Activated B cell treated with CpG ODN at 0.5 μM for 24 hours (primary cell): ENCODE measurements at regions of chr3 and their contacts with region 1.

Region 1: DNA sequence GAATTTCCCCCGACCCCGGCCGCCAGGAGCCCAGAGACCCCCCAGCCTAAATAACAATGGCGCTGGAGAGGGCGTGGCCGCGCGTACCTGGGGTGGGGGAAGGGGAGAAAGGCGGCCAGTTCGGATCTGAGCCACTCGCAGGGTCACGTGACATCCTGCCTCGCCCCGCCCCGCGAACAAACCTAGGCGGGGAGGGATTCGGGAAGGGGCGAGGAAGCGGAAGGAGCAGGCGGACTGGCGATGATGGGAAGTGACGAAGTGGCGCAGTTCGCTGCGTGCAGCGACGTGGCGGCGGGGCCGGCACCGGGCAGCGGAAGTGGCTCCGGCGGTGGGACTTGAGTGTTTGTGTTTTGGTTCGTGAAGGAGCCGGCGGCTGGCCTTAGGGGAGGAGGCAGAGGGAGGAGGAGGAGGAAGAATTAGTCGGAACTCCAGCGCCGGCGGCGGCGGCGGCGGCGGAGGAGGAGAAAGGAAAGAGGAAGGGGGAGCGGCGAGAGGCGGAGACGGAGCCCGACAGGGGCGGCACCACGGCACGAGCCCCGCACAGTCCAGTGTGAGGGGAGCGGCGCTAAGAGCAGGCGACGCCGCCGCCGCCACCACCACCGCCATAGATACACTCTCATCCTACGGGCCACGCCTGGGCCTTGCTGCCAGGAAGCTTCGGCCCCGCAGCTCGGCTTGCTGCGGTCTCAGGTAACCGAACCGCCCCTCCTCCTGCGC is at the start of gene RAB5A:
- DNase-seq: peak; percentile 95
- ATAC-seq: peak; percentile 87
- H3K4me3 Mint-ChIP-seq: peak within 1 kb of the TSS; percentile 94
- H3K27ac Mint-ChIP-seq: peak within 1 kb of the TSS; percentile 96
- H3K4me1 Mint-ChIP-seq: peaks cover 47% of the 10 kb centered on the region
- H3K27me3 Mint-ChIP-seq: no peaks in the 10 kb centered on the region
- CTCF ChIP-seq: no peak
- total RNA-seq, gene RAB5A: 43.2 and 45.2 TPM in 2 replicates

Region 2: GRCh38 chr3:18424729-18425640 is 1522.0 kb before region 1 on chr3 and contains the start of gene SATB1:
- CTCF ChIA-PET with region 1: no interaction called
- POLR2A ChIA-PET with region 1: no interaction called
- intact Hi-C with region 1: loop called (anchors 10 kb)
- DNase-seq: peak; percentile 68
- ATAC-seq: peak; percentile 49
- H3K4me3 Mint-ChIP-seq: peak within 1 kb of the TSS; percentile 91
- H3K27ac Mint-ChIP-seq: peak within 1 kb of the TSS; percentile 87
- H3K4me1 Mint-ChIP-seq: peaks cover 40% of the 10 kb centered on the region
- H3K27me3 Mint-ChIP-seq: no peaks in the 10 kb centered on the region
- CTCF ChIP-seq: no peak
- total RNA-seq, gene SATB1: 23.0 and 30.8 TPM in 2 replicates

Region 3: DNA sequence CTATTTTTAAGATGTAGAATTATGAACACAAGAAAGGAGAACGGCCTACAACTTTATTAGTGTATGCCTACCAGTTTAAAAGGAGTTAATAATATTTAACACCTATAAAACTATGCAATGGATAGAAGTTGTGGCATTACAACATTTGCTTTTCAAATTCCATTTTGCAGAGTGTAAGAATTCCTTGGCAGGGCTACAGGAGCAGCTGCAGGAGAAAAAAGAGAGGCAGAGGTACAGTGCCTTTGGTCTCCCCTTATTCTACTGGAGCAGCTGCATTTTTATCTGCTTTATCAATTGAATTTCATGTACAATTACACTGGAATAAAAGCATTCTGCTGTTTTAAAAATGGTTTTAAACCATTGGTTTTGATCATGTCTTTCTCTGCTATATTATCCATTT is 944.4 kb before region 1 on chr3:
- CTCF ChIA-PET with region 1: no interaction called
- POLR2A ChIA-PET with region 1: no interaction called
- intact Hi-C with region 1: no loop called
- DNase-seq: no peak
- ATAC-seq: no peak
- H3K4me3 Mint-ChIP-seq: no peak overlapping the region
- H3K27ac Mint-ChIP-seq: no peak overlapping the region
- H3K4me1 Mint-ChIP-seq: no peaks in the 10 kb centered on the region
- H3K27me3 Mint-ChIP-seq: no peaks in the 10 kb centered on the region
- CTCF ChIP-seq: no peak

Region 4: DNA sequence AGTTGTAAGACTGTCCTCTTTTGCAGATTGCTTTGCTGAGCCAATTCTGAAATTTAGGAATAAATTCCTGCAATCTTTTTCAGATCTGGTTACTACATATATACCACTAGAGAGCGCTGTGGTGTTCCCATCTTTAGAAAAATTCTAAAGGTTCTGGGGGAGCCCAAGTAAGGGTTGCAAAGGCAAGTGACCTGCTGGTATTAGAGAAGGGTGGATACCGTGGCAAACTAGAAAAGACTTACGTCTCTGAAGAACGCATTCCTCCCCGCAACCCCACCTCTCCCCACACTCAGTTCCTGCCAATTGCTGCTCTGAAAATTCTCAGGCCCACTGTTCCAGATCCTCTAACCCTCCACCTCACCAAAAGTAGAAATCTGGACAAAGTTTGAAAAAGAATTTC is 61.5 kb before region 1 on chr3:
- CTCF ChIA-PET with region 1: no interaction called
- POLR2A ChIA-PET with region 1: no interaction called
- intact Hi-C with region 1: loop called (anchors 5 kb)
- DNase-seq: no peak
- ATAC-seq: no peak
- H3K4me3 Mint-ChIP-seq: no peak overlapping the region
- H3K27ac Mint-ChIP-seq: no peak overlapping the region
- H3K4me1 Mint-ChIP-seq: no peaks in the 10 kb centered on the region
- H3K27me3 Mint-ChIP-seq: no peaks in the 10 kb centered on the region
- CTCF ChIP-seq: no peak

Region 5: GRCh38 chr3:19960696-19961095 is 13.7 kb after region 1 on chr3:
- CTCF ChIA-PET with region 1: no interaction called
- POLR2A ChIA-PET with region 1: no interaction called
- intact Hi-C with region 1: loop called (anchors 1 kb)
- DNase-seq: no peak
- ATAC-seq: no peak
- H3K4me3 Mint-ChIP-seq: no peak overlapping the region
- H3K27ac Mint-ChIP-seq: no peak overlapping the region
- H3K4me1 Mint-ChIP-seq: peaks cover 36% of the 10 kb centered on the region
- H3K27me3 Mint-ChIP-seq: no peaks in the 10 kb centered on the region
- CTCF ChIP-seq: no peak

Region 6: GRCh38 chr3:20111836-20112235 is 164.8 kb after region 1 on chr3:
- CTCF ChIA-PET with region 1: no interaction called
- POLR2A ChIA-PET with region 1: no interaction called
- intact Hi-C with region 1: no loop called
- DNase-seq: no peak
- ATAC-seq: no peak
- H3K4me3 Mint-ChIP-seq: no peak overlapping the region
- H3K27ac Mint-ChIP-seq: no peak overlapping the region
- H3K4me1 Mint-ChIP-seq: no peaks in the 10 kb centered on the region
- H3K27me3 Mint-ChIP-seq: no peaks in the 10 kb centered on the region
- CTCF ChIP-seq: no peak

Region 7: DNA sequence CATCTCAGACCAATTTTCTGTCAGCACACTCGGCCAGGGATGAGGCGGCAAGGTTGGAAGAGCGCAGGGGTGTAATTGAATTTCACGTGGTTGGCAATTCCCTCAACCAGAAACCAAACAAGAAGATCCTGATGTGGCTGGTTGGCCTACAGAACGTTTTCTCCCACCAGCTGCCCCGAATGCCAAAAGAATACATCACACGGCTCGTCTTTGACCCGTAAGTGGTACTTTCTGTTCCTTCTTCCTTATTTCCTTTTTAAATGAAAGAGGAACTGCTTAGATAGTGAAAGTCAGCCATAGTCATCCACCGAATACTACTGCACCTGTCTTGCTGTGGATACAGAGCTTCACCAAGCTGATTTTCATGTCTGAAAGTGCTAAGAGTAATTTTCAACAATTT is 178.9 kb after region 1 on chr3:
- CTCF ChIA-PET with region 1: no interaction called
- POLR2A ChIA-PET with region 1: interaction called, 5 read pairs
- intact Hi-C with region 1: loop called (anchors 1 kb)
- DNase-seq: peak; percentile 39
- ATAC-seq: peak; percentile 95
- H3K4me3 Mint-ChIP-seq: peak overlapping the region; percentile 58
- H3K27ac Mint-ChIP-seq: peak overlapping the region; percentile 87
- H3K4me1 Mint-ChIP-seq: peaks cover 38% of the 10 kb centered on the region
- H3K27me3 Mint-ChIP-seq: no peaks in the 10 kb centered on the region
- CTCF ChIP-seq: no peak